ENCODE measurements at regions of chr12 and their contacts with region 1.

Region 1: GRCh38 chr12:55073043-55074022 is 52.9 kb upstream of the OR9K2 start:
- DNase-seq: peak; percentile 69 to 79 (median 71)
- H3K4me3 ChIP-seq: no peak overlapping the region
- H3K4me3 Mint-ChIP-seq: no peak overlapping the region
- H3K27ac ChIP-seq: no peak overlapping the region
- H3K27ac Mint-ChIP-seq: peak overlapping the region in 1 of 7 donors; percentile 24
- H3K4me1 ChIP-seq: no peaks in the 10 kb centered on the region
- H3K4me1 Mint-ChIP-seq: peaks cover 0 to 3% (median 1%) of the 10 kb centered on the region in 4 donors
- H3K27me3 ChIP-seq: peaks cover 5% of the 10 kb centered on the region
- H3K27me3 Mint-ChIP-seq: peaks cover 10 to 30% of the 10 kb centered on the region in 2 donors

Region 2: GRCh38 chr12:54723379-54724256 is 349.7 kb before region 1 on chr12:
- CTCF ChIA-PET with region 1: interaction called, 30 read pairs
- POLR2A ChIA-PET with region 1: no interaction called
- intact Hi-C with region 1: loop called (anchors 1 kb)
- DNase-seq: peak; percentile 38 to 54 (median 44)
- H3K4me3 ChIP-seq: no peak overlapping the region
- H3K4me3 Mint-ChIP-seq: no peak overlapping the region
- H3K27ac ChIP-seq: no peak overlapping the region
- H3K27ac Mint-ChIP-seq: no peak overlapping the region
- H3K4me1 ChIP-seq: peaks cover 4% of the 10 kb centered on the region
- H3K4me1 Mint-ChIP-seq: peaks cover 5 to 32% (median 12%) of the 10 kb centered on the region in 4 donors
- H3K27me3 ChIP-seq: no peaks in the 10 kb centered on the region
- H3K27me3 Mint-ChIP-seq: peaks cover 7 to 10% of the 10 kb centered on the region in 2 donors

Region 3: GRCh38 chr12:54759751-54760150 is 313.6 kb before region 1 on chr12:
- CTCF ChIA-PET with region 1: interaction called, 24 read pairs
- POLR2A ChIA-PET with region 1: no interaction called
- intact Hi-C with region 1: no loop called
- DNase-seq: peak in 1 of 5 donors; percentile 23
- H3K4me3 ChIP-seq: no peak overlapping the region
- H3K4me3 Mint-ChIP-seq: no peak overlapping the region
- H3K27ac ChIP-seq: no peak overlapping the region
- H3K27ac Mint-ChIP-seq: no peak overlapping the region
- H3K4me1 ChIP-seq: peaks cover 3% of the 10 kb centered on the region
- H3K4me1 Mint-ChIP-seq: peaks cover 0 to 6% (median under 1%) of the 10 kb centered on the region in 4 donors
- H3K27me3 ChIP-seq: no peaks in the 10 kb centered on the region
- H3K27me3 Mint-ChIP-seq: peaks cover 0 to 7% of the 10 kb centered on the region in 2 donors

Region 4: DNA sequence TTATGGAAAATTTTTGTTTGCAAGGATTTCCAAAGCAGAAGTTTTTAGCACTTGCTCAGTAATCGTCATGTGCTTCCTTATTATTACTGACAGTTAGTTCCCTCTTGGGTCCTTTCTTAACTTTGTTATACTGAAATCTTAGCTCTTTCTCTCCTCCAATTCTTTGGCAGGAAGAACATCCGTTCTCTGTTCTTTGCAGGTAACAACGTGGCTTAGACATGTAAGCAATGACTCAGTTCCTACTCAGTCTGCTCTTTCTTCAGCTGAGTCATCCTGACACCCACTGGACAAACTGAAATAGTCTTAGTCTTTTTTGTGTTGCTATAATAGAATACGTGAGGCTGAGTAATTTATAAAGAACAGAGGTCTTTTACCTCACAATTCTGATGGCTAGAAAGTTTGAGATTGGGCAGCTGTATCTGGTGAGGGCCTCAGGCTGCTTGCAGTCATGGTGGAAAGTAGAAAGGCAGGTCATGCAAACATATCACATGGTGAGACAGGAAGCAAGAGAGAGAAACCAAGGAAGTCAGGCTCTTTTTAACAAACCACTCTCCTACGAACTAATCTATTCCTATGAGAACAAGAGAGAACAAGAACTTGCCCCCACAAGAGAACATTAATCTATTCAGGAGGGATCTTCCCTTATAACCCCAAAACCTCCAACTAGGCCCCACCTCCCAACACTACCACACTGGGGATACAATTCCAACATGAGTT is 137.9 kb before region 1 on chr12:
- CTCF ChIA-PET with region 1: interaction called, 28 read pairs
- POLR2A ChIA-PET with region 1: interaction called, 4 read pairs
- intact Hi-C with region 1: no loop called
- DNase-seq: peak; percentile 53 to 71 (median 60)
- H3K4me3 ChIP-seq: no peak overlapping the region
- H3K4me3 Mint-ChIP-seq: peak overlapping the region in 7 of 8 donors; percentile 42 to 85 (median 74)
- H3K27ac ChIP-seq: peak overlapping the region; percentile 35
- H3K27ac Mint-ChIP-seq: peak overlapping the region; percentile 80 to 96 (median 91)
- H3K4me1 ChIP-seq: peaks cover 45% of the 10 kb centered on the region
- H3K4me1 Mint-ChIP-seq: peaks cover 33 to 53% (median 44%) of the 10 kb centered on the region in 4 donors
- H3K27me3 ChIP-seq: no peaks in the 10 kb centered on the region
- H3K27me3 Mint-ChIP-seq: no peaks in the 10 kb centered on the region

Region 5: DNA sequence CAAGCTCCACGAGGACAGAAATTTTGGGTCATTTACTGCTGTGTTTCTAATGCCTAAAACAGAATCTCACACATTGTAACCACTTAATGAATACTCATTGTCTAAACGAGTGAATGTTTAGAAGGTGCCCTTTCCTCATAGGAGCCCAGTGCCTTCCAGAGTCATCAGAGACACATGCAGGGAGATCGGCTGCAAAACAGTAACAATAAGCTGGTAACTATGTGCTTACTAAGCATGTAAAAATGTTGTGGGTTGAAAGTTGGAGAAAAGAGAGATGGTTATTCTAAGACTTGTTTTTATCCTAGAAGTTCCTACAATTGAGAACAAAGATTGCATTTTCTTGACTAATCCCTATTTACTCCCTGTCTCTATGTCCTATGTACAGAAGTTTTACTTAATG is 96.2 kb before region 1 on chr12:
- CTCF ChIA-PET with region 1: interaction called, 19 read pairs
- POLR2A ChIA-PET with region 1: interaction called, 4 read pairs
- intact Hi-C with region 1: no loop called
- DNase-seq: no peak
- H3K4me3 ChIP-seq: peak overlapping the region; percentile 16 to 22
- H3K4me3 Mint-ChIP-seq: peak overlapping the region; percentile 81 to 99 (median 93)
- H3K27ac ChIP-seq: peak overlapping the region; percentile 38
- H3K27ac Mint-ChIP-seq: peak overlapping the region; percentile 84 to 99 (median 94)
- H3K4me1 ChIP-seq: peaks cover 98% of the 10 kb centered on the region
- H3K4me1 Mint-ChIP-seq: peaks cover 77 to 98% (median 90%) of the 10 kb centered on the region in 4 donors
- H3K27me3 ChIP-seq: no peaks in the 10 kb centered on the region
- H3K27me3 Mint-ChIP-seq: no peaks in the 10 kb centered on the region

Region 6: GRCh38 chr12:55008944-55009585 is 64.3 kb before region 1 on chr12:
- CTCF ChIA-PET with region 1: interaction called, 751 read pairs
- POLR2A ChIA-PET with region 1: no interaction called
- intact Hi-C with region 1: no loop called
- DNase-seq: no peak
- H3K4me3 ChIP-seq: no peak overlapping the region
- H3K4me3 Mint-ChIP-seq: no peak overlapping the region
- H3K27ac ChIP-seq: no peak overlapping the region
- H3K27ac Mint-ChIP-seq: no peak overlapping the region
- H3K4me1 ChIP-seq: no peaks in the 10 kb centered on the region
- H3K4me1 Mint-ChIP-seq: no peaks in the 10 kb centered on the region
- H3K27me3 ChIP-seq: no peaks in the 10 kb centered on the region
- H3K27me3 Mint-ChIP-seq: peaks cover 2 to 5% of the 10 kb centered on the region in 2 donors